ENCODE measurements at regions of chr4 and their contacts with region 1.

Region 1: DNA sequence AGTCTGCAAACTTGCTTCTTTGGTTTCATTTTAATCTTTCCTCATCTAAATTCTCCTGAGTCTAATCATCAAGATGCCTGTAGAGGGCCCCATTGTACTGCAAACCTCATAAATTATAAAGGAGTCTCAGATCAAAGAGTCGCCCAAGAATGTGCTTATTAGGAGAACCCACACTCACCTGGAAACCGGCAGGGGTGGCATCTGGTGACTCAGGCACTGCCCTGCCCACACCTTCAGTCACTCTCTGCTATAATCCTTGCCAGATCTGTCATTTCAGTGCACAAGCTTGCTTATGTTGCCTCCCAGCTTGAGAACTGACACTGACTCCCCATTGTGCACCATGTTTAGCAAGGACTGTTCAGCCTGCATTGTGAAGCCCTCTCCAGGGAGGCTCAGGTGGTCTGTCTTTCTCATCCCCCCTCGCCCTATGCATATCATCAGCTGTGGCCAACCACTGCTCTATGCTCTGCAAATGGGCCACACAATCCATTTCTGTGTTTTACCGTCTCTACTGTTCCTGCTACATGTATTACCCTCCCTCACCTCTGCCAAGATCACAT is 12.4 kb downstream of the EPGN start:
- DNase-seq: peak; percentile 55
- H3K4me3 ChIP-seq: no peak overlapping the region
- H3K27ac ChIP-seq: no peak overlapping the region
- H3K27me3 ChIP-seq: no peaks in the 10 kb centered on the region
- CTCF ChIP-seq: peak; percentile 59

Region 2: DNA sequence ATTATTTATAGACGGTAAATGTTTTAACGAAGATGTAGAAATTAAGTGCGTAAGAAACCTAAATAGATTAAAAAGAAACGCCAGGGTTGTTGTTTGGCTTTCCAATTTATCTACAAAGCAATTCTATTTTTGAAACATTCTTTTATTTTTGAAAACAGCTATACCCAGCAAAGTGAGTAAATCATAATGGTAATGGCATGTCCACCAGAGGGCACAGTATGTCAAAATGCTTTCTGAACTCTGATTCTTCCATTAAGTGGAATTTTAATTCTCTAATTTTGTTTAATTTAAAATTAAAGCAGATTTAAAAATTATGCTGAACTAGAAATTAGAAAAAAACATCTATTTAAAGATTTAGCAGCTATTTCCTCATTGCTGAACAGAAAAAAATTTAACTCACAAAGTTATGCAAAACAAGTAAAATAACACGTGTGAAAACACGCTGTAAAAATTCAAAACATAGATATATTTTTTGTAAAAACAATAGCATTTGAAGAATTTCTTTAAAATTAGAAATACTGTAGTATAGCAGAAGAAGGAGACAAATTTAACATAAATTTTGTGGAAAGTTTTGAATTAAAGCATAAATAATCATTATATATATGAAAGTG is 726.9 kb before region 1 on chr4:
- in situ Hi-C with region 1: no loop called
- DNase-seq: peak; percentile 41
- H3K4me3 ChIP-seq: no peak overlapping the region
- H3K27ac ChIP-seq: no peak overlapping the region
- H3K27me3 ChIP-seq: no peaks in the 10 kb centered on the region
- CTCF ChIP-seq: peak; percentile 58

Region 3: GRCh38 chr4:74189331-74190043 is 131.2 kb before region 1 on chr4:
- in situ Hi-C with region 1: loop called (anchors 25 kb)
- DNase-seq: no peak
- H3K4me3 ChIP-seq: no peak overlapping the region
- H3K27ac ChIP-seq: no peak overlapping the region
- H3K27me3 ChIP-seq: no peaks in the 10 kb centered on the region
- CTCF ChIP-seq: peak; percentile 64

Region 4: GRCh38 chr4:74444891-74445642 is 124.4 kb after region 1 on chr4 and contains the start of gene AREG:
- in situ Hi-C with region 1: no loop called
- DNase-seq: peak; percentile 40
- H3K4me3 ChIP-seq: peak within 1 kb of the TSS; percentile 74
- H3K27ac ChIP-seq: peak within 1 kb of the TSS; percentile 20
- H3K27me3 ChIP-seq: no peaks in the 10 kb centered on the region
- CTCF ChIP-seq: peak; percentile 84